ENCODE measurements at regions of chr14 and their contacts with region 1.

Region 1: GRCh38 chr14:70887207-70887681 is 20.0 kb upstream of the PCNX1 start:
- DNase-seq: no peak
- H3K4me3 Mint-ChIP-seq: peak overlapping the region; percentile 73
- H3K27ac Mint-ChIP-seq: peak overlapping the region; percentile 88
- H3K4me1 Mint-ChIP-seq: peaks cover 98% of the 10 kb centered on the region
- H3K27me3 Mint-ChIP-seq: no peaks in the 10 kb centered on the region

Region 2: GRCh38 chr14:69796797-69797500 is 1090.3 kb before region 1 on chr14 and contains the start of gene SLC10A1:
- intact Hi-C with region 1: no loop called
- DNase-seq: no peak
- H3K4me3 Mint-ChIP-seq: no peak within 1 kb of the TSS
- H3K27ac Mint-ChIP-seq: no peak within 1 kb of the TSS
- H3K4me1 Mint-ChIP-seq: no peaks in the 10 kb centered on the region
- H3K27me3 Mint-ChIP-seq: peaks cover 16% of the 10 kb centered on the region
- total RNA-seq, gene SLC10A1: not detected in 2 replicates

Region 3: GRCh38 chr14:70514168-70515069 is 372.8 kb before region 1 on chr14:
- intact Hi-C with region 1: no loop called
- DNase-seq: no peak
- H3K4me3 Mint-ChIP-seq: peak overlapping the region; percentile 2
- H3K27ac Mint-ChIP-seq: peak overlapping the region; percentile 19
- H3K4me1 Mint-ChIP-seq: peaks cover 23% of the 10 kb centered on the region
- H3K27me3 Mint-ChIP-seq: peaks cover 2% of the 10 kb centered on the region

Region 4: GRCh38 chr14:70655110-70655826 is 232.0 kb before region 1 on chr14:
- intact Hi-C with region 1: loop called (anchors 2 kb)
- DNase-seq: peak; percentile 72
- H3K4me3 Mint-ChIP-seq: peak overlapping the region; percentile 74
- H3K27ac Mint-ChIP-seq: peak overlapping the region; percentile 97
- H3K4me1 Mint-ChIP-seq: peaks cover 85% of the 10 kb centered on the region
- H3K27me3 Mint-ChIP-seq: no peaks in the 10 kb centered on the region

Region 5: DNA sequence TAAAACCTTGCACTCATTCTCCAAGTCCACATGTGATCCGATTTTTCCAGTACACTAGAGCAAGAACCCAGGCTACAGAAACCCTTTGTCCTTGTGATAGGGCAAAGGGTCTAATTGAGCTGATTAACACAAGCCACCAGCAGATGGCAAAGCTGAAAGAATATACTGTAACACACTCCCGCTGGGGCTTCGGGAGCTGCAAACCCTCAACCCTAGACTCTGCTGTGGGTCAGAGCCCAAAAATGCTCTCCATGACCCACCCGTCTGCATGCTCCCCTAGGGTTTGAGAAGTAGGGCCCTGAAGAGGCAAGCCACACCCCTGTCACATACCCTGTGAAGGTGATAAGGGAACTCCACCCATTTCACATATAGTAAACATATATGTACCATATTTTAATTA is 13.6 kb before region 1 on chr14:
- intact Hi-C with region 1: loop called (anchors 1 kb)
- DNase-seq: no peak
- H3K4me3 Mint-ChIP-seq: no peak overlapping the region
- H3K27ac Mint-ChIP-seq: no peak overlapping the region
- H3K4me1 Mint-ChIP-seq: peaks cover 24% of the 10 kb centered on the region
- H3K27me3 Mint-ChIP-seq: no peaks in the 10 kb centered on the region

Region 6: GRCh38 chr14:70919774-70920173 is 32.5 kb after region 1 on chr14:
- intact Hi-C with region 1: loop called (anchors 5 kb)
- DNase-seq: no peak
- H3K4me3 Mint-ChIP-seq: no peak overlapping the region
- H3K27ac Mint-ChIP-seq: no peak overlapping the region
- H3K4me1 Mint-ChIP-seq: peaks cover 77% of the 10 kb centered on the region
- H3K27me3 Mint-ChIP-seq: no peaks in the 10 kb centered on the region

Region 7: GRCh38 chr14:71267007-71267513 is 379.8 kb after region 1 on chr14:
- intact Hi-C with region 1: loop called (anchors 5 kb)
- DNase-seq: no peak
- H3K4me3 Mint-ChIP-seq: peak overlapping the region; percentile 60
- H3K27ac Mint-ChIP-seq: peak overlapping the region; percentile 80
- H3K4me1 Mint-ChIP-seq: peaks cover 52% of the 10 kb centered on the region
- H3K27me3 Mint-ChIP-seq: no peaks in the 10 kb centered on the region

Measured in activated T-helper 1 cell treated with anti-CD3 and anti-CD28 coated beads, Interleukin-12 subunit alpha, Interleukin-12 subunit beta, Interleukin-2, Interleukin-4 antibody, amounts not matched to agents 30 ng/mL and 10 ng/mL and 1 ng/mL, durations not matched to agents 14 hours and 24 hours and 36 hours (primary cell).